GM23248 (cell line): ENCODE measurements at regions of chr6 and their contacts with region 1.

Region 1: GRCh38 chr6:27188885-27189418 is 58.5 kb upstream of the PRSS16 start:
- DNase-seq: peak; percentile 88
- H3K4me3 ChIP-seq: peak overlapping the region; percentile 87
- H3K27ac ChIP-seq: peak overlapping the region; percentile 59
- H3K4me1 ChIP-seq: no peaks in the 10 kb centered on the region
- H3K27me3 ChIP-seq: no peaks in the 10 kb centered on the region

Region 2: GRCh38 chr6:27753668-27754407 is 564.9 kb after region 1 on chr6:
- in situ Hi-C with region 1: loop called (anchors 10 kb)
- DNase-seq: peak; percentile 89
- H3K4me3 ChIP-seq: peak overlapping the region; percentile 83
- H3K27ac ChIP-seq: no peak overlapping the region
- H3K4me1 ChIP-seq: no peaks in the 10 kb centered on the region
- H3K27me3 ChIP-seq: no peaks in the 10 kb centered on the region

Region 3: DNA sequence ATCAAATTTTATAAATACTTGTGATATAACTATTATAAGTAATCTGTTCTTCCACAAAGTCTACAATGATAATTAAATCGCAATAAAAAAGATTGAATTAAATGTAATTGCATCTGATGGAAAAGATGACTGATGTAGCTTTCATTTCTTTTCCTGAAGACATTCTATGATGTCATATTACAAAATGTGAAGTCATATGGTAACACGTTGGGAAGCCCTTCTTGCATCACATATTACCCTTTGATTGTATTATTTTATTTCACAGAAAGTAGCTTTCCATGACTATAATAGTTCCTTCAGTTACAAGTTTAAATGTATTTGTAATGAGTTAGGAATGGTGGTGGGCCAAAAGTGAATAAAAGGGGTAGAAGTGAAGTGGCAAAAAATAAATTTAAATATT is 742.3 kb after region 1 on chr6:
- in situ Hi-C with region 1: no loop called
- DNase-seq: no peak
- H3K4me3 ChIP-seq: no peak overlapping the region
- H3K27ac ChIP-seq: no peak overlapping the region
- H3K4me1 ChIP-seq: no peaks in the 10 kb centered on the region
- H3K27me3 ChIP-seq: no peaks in the 10 kb centered on the region